Activated naive CD4-positive, alpha-beta T cell treated with anti-CD3 and anti-CD28 coated beads for 36 hours (primary cell): ENCODE measurements at regions of chr12 and their contacts with region 1.

Region 1: GRCh38 chr12:53441040-53441833 is at the start of gene PRR13:
- DNase-seq: peak; percentile 100
- H3K4me3 Mint-ChIP-seq: peak within 1 kb of the TSS; percentile 90
- H3K27ac Mint-ChIP-seq: peak within 1 kb of the TSS; percentile 98
- H3K4me1 Mint-ChIP-seq: peaks cover 38% of the 10 kb centered on the region
- H3K27me3 Mint-ChIP-seq: no peaks in the 10 kb centered on the region
- total RNA-seq, gene PRR13: 207 to 216 TPM

Region 2: DNA sequence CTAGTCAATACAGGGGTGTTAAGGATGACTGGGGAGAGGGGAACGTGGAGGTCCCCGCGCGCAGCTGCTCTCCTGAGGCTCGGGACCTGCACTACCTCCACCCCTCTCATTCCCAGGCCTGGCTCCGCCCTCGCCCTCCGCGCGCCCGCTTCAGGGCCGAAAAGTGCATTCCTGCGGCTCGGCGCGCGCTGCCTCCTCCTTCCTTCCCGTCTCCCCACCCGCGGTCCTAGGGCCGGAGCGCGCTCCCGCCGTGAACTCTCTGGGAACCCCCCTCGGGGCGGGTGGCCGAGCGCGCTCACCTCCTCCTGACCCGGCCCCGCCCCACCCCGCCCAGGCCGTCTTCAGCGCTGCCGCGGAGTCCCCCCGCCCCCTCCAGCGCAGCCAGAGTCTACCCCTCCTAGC is 220.4 kb before region 1 on chr12:
- CTCF ChIA-PET with region 1: no interaction called
- intact Hi-C with region 1: loop called (anchors 2 kb)
- DNase-seq: peak; percentile 80
- H3K4me3 Mint-ChIP-seq: peak overlapping the region; percentile 90
- H3K27ac Mint-ChIP-seq: peak overlapping the region; percentile 92
- H3K4me1 Mint-ChIP-seq: peaks cover 72% of the 10 kb centered on the region
- H3K27me3 Mint-ChIP-seq: no peaks in the 10 kb centered on the region

Region 3: GRCh38 chr12:53295070-53295890 is 146.0 kb before region 1 on chr12 and contains the start of gene PFDN5:
- CTCF ChIA-PET with region 1: no interaction called
- intact Hi-C with region 1: loop called (anchors 1 kb)
- DNase-seq: peak; percentile 94
- H3K4me3 Mint-ChIP-seq: peak within 1 kb of the TSS; percentile 98
- H3K27ac Mint-ChIP-seq: peak within 1 kb of the TSS; percentile 95
- H3K4me1 Mint-ChIP-seq: peaks cover 53% of the 10 kb centered on the region
- H3K27me3 Mint-ChIP-seq: no peaks in the 10 kb centered on the region
- total RNA-seq, gene PFDN5: 376 to 383 TPM

Region 4: DNA sequence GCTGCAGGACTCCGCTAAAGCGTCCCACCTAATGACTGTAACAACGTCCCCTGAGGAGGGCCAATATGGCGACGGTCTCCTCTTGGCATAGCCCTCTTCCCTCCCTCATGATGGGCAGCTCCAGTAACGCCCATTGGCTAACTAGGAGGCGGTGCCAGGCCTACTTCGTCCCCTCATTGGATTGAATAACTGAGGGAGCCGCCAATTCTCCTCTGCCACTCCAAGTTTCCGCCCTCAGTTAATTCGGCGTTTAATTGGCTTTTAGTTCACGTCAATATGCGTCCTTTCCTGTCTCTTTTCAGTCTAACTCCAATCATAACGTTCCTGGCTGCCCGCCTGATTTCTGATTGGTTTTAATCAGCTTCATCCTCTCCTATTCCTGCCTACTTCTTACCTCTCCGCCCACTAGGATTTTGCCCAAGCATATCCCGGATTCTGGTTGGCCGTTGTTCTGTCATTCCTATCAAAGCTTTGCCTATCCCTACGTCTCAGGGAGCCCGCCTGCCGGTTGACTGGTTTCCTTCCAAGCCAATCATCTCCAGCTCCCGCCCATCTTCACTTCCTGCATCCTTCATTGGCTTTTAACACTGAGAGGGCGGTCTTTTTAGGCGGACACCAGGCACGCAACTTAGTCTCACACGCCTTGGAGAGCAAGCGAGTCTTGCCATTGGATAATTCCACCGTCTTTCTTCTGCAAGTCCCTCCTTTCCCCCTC is 61.7 kb before region 1 on chr12:
- CTCF ChIA-PET with region 1: interaction called, 7 read pairs
- intact Hi-C with region 1: loop called (anchors 1 kb)
- DNase-seq: peak; percentile 99
- H3K4me3 Mint-ChIP-seq: no peak overlapping the region
- H3K27ac Mint-ChIP-seq: no peak overlapping the region
- H3K4me1 Mint-ChIP-seq: peaks cover 48% of the 10 kb centered on the region
- H3K27me3 Mint-ChIP-seq: no peaks in the 10 kb centered on the region

Region 5: DNA sequence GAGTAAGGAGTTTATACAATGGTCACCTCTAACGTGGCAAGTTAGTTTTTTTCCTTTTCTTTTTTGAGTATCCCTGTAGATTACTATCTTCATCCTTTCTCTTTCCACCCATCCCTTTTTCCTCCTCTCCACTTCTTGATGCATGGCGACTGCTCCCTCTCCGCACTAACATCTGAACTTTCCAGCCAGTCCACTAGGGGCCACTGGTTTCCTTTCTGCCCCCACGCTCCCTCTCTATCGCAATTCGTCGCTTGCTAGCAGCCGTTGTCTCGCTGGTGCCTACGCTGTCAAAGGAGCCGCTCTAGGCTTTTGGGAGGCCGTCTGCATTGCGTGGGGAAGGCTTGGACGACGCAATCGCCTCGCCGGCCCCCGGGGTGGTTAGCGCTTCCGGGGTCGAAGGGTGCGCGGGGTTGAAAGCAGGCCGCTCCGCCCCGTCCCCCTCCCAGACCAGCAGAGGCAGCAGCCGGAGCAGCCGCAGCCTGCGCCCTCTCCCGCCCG is 10.5 kb after region 1 on chr12 and contains the start of gene PCBP2:
- CTCF ChIA-PET with region 1: interaction called, 7 read pairs
- intact Hi-C with region 1: loop called (anchors 1 kb)
- DNase-seq: peak; percentile 99
- H3K4me3 Mint-ChIP-seq: peak within 1 kb of the TSS; percentile 99
- H3K27ac Mint-ChIP-seq: peak within 1 kb of the TSS; percentile 99
- H3K4me1 Mint-ChIP-seq: peaks cover 36% of the 10 kb centered on the region
- H3K27me3 Mint-ChIP-seq: no peaks in the 10 kb centered on the region
- total RNA-seq, gene PCBP2: 1,085 to 1,132 TPM

Region 6: DNA sequence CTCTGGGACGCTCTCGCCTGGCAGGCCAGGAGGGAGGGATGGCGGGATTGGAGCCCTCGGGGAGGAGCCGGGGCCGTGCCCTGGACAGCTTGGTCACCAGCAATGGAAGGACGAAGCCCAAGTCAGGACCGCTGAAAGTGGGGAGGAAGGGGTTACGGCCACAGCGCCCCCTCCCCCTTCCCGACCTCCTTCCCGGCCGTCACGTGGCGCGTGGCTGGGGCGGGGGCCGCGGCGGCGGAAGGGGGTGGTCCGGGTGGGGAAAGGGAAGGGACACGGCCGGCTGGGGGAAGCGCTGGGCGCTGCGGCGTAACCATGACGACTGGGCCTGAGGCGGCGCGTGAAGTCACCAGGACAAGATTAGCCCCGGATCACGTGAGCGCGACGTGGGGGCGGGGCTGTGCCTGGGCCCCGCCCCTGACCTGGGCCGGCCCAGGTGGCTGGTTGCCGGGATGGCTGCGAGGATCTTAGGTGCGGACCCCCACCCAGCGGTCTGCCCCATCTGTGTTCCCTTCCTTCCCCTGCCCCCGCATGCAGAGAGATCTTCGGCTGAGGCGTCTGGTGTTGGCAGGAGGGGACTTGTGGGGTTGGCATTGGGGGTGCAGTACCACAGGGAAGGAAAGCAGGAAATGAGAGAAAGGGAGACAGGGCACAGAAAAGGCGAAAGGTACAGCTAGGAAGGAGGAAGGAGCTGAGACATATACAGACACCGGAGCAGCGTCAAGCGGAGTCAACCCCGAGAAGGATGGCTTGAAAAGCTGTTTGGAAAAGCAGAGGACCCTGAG is 51.8 kb after region 1 on chr12:
- CTCF ChIA-PET with region 1: interaction called, 3 read pairs
- intact Hi-C with region 1: loop called (anchors 1 kb)
- DNase-seq: peak; percentile 90
- H3K4me3 Mint-ChIP-seq: peak overlapping the region; percentile 88
- H3K27ac Mint-ChIP-seq: peak overlapping the region; percentile 81
- H3K4me1 Mint-ChIP-seq: peaks cover 26% of the 10 kb centered on the region
- H3K27me3 Mint-ChIP-seq: no peaks in the 10 kb centered on the region

Region 7: DNA sequence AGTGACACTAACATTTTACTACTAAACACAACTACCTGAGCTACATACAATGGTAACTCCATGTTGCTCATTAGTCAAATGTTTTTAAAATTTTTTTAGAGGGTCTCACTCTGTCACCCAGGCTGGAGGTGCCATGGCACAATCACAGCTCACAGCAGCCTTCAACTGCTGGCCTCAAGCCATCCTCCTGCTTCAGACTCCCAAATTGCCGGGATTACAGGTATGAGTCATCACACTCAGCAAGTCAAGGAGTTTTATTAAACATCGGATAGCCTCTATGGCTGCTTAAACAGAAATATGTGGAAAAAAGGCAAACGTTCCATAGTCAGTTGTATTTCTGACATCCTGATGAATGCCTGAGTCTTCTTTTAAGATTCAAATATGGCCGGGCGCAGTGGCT is 77.1 kb after region 1 on chr12:
- CTCF ChIA-PET with region 1: no interaction called
- intact Hi-C with region 1: no loop called
- DNase-seq: no peak
- H3K4me3 Mint-ChIP-seq: no peak overlapping the region
- H3K27ac Mint-ChIP-seq: no peak overlapping the region
- H3K4me1 Mint-ChIP-seq: no peaks in the 10 kb centered on the region
- H3K27me3 Mint-ChIP-seq: no peaks in the 10 kb centered on the region

Region 8: GRCh38 chr12:53561590-53561953 is 120.3 kb after region 1 on chr12:
- CTCF ChIA-PET with region 1: no interaction called
- intact Hi-C with region 1: no loop called
- DNase-seq: no peak
- H3K4me3 Mint-ChIP-seq: no peak overlapping the region
- H3K27ac Mint-ChIP-seq: peak overlapping the region; percentile 81
- H3K4me1 Mint-ChIP-seq: peaks cover 67% of the 10 kb centered on the region
- H3K27me3 Mint-ChIP-seq: no peaks in the 10 kb centered on the region

Region 9: DNA sequence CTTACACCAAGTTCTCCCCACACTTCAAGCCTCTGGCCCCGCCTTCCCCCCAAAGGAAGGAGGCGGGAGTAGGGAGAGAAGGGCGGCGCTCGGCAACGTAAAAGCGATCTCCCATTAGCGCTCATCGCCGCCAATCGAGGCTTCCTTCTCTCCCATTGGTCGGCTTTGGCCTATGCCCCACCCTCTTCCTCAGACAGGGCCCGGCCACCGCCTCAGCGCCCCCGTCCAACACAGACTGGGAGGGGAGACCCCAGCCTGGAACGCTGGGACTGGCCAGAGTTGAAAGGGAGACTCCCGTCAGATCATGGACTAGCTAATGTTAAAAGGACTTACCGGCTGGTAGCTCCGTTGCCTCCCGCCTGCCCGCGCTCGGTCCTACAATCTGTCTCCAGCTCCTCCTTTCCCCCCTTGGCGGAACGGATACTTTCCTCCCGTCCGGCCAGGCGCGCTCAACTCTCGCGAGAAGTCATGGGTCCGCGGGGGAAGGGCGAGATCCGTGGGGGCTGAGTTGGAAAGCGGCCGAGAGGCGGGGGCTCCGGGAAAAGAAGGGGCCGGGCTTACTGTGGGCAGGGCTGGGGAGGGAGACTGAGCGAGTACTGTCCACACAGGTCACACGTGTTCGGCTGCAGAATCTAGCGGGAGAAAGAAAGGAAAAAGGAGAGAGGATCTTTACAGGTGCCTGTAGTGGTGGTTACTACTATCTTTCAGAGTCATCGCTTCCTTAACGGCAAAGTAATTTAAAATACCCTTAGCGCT is 184.9 kb after region 1 on chr12 and contains the start of gene ATF7:
- CTCF ChIA-PET with region 1: no interaction called
- intact Hi-C with region 1: loop called (anchors 1 kb)
- DNase-seq: peak; percentile 99
- H3K4me3 Mint-ChIP-seq: peak within 1 kb of the TSS; percentile 97
- H3K27ac Mint-ChIP-seq: peak within 1 kb of the TSS; percentile 96
- H3K4me1 Mint-ChIP-seq: peaks cover 44% of the 10 kb centered on the region
- H3K27me3 Mint-ChIP-seq: no peaks in the 10 kb centered on the region
- total RNA-seq, gene ATF7: 19.7 to 19.8 TPM

Region 10: DNA sequence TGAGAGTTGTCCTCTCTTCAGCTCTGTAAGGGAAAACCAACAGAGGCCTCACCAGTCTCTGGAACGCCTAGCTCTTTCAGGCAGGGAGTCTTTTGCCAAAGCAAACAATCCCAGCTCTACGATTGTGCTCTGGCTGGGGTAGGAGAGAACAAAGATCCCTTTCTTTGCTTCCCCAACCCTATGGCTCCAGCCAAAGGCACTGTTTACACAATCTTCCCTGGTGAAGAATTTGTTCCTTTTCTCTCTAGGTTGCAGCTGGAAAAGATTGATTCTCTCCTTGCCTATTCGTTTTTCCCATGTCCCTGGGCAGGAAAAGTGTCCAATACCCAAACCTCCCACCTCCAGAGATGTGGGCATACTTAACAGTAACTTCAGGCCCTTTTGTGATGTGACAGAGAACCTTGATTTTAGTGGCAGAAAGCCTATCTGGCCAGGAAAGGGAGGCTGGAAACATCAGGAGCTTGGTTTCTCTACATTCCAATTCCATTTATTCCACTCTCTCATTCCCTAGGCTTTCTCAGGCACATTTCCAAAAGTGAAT is 217.8 kb after region 1 on chr12:
- CTCF ChIA-PET with region 1: no interaction called
- intact Hi-C with region 1: no loop called
- DNase-seq: no peak
- H3K4me3 Mint-ChIP-seq: no peak overlapping the region
- H3K27ac Mint-ChIP-seq: no peak overlapping the region
- H3K4me1 Mint-ChIP-seq: no peaks in the 10 kb centered on the region
- H3K27me3 Mint-ChIP-seq: no peaks in the 10 kb centered on the region